ENCODE measurements at regions of chr4 and their contacts with region 1.

Region 1: DNA sequence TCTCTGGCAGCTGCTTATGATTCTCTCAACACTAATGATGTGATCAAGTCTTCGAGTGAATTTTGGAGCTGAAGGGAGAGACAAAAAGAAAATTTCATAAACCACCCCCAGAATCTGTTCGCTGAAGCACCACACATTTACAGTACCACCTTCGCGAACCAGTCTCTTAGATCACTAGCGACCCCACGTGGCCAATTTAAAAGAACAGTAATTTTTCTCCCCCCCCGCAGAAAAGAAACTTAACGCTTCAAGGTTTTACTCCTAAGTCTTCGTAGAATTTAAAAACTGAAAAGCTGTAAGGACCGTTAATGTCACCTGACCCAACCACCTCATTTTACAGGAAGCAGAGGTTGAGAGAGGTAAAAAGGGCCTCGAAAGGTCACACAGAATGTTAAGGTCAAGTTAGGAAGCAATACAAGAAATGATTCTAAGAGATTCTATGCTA is 187.5 kb downstream of the QDPR start:
- DNase-seq: peak; percentile 75
- ATAC-seq: peak; percentile 84
- H3K4me3 Mint-ChIP-seq: no peak overlapping the region
- H3K27ac Mint-ChIP-seq: peak overlapping the region; percentile 32
- H3K4me1 Mint-ChIP-seq: peaks cover 14% of the 10 kb centered on the region
- H3K27me3 Mint-ChIP-seq: no peaks in the 10 kb centered on the region

Region 2: DNA sequence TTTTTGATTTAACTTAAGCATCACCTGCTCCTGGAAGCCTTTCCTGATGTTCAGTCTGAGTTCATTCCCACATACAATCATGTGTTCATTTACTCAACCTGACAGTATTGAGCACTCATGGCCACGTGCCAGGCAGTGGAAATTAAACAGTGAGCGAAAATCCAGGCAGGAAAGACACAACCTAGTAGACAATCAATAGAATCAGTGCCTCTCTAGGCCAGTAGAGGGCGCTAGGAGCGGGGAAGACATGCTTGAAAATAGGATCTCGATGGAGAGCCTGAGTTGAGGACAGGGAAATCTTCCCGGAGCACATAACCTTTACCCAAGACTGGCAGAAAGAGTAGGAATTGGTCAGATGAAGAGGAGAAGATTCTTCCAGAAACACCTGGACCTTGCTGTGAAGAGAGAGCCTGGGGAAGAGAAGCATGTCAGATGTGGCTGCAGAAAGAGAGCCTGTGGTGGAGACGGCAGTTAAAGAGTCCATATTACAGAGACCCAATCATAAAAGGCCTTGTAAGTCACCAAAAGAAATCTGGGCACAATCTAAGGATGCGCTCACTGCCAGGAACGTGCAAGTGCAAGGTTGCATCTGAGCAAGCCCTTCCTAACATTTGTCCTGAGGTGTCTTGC is 529.5 kb before region 1 on chr4:
- CTCF ChIA-PET with region 1: no interaction called
- POLR2A ChIA-PET with region 1: no interaction called
- intact Hi-C with region 1: loop called (anchors 2 to 10 kb)
- DNase-seq: peak; percentile 69
- ATAC-seq: peak; percentile 33
- H3K4me3 Mint-ChIP-seq: no peak overlapping the region
- H3K27ac Mint-ChIP-seq: no peak overlapping the region
- H3K4me1 Mint-ChIP-seq: no peaks in the 10 kb centered on the region
- H3K27me3 Mint-ChIP-seq: no peaks in the 10 kb centered on the region

Region 3: DNA sequence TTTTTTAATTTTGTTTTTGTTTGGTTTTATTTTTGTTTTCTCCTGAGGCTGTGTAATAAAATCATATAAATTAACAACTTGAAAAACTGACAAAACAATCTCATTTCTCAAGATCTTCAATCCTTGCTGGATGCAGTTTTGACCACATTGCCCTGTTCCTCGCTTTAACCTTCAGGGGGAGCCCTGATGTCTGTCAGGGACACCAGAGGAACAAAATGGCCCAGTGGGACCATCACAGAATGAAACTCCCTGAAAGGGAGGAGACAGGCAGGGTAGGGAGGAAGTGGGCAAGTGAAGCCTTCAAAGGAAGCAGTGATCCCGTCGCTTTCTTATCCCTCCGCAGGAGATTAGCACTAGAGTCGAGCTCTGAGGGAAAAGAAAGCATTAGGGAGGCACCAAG is 151.1 kb before region 1 on chr4:
- CTCF ChIA-PET with region 1: no interaction called
- POLR2A ChIA-PET with region 1: no interaction called
- intact Hi-C with region 1: loop called in 1 of 2 experiments (anchors 1 kb)
- DNase-seq: no peak
- ATAC-seq: no peak
- H3K4me3 Mint-ChIP-seq: no peak overlapping the region
- H3K27ac Mint-ChIP-seq: no peak overlapping the region
- H3K4me1 Mint-ChIP-seq: no peaks in the 10 kb centered on the region
- H3K27me3 Mint-ChIP-seq: peaks cover 4% of the 10 kb centered on the region